H1 (cell line): ENCODE measurements at regions of chr5 and their contacts with region 1.

Region 1: GRCh38 chr5:73705364-73705763 is 79.4 kb downstream of the ARHGEF28 start:
- DNase-seq: no peak
- H3K4me3 ChIP-seq: no peak overlapping the region
- H3K27ac ChIP-seq: no peak overlapping the region
- H3K4me1 ChIP-seq: no peaks in the 10 kb centered on the region
- H3K27me3 ChIP-seq: no peaks in the 10 kb centered on the region
- CTCF ChIP-seq: no peak
- EP300 ChIP-seq: no peak
- POLR2A ChIP-seq: no peak
- RAD21 ChIP-seq: no peak

Region 2: GRCh38 chr5:73693481-73694061 is 11.8 kb before region 1 on chr5:
- CTCF ChIA-PET with region 1: interaction called, 21 read pairs
- POLR2A ChIA-PET with region 1: interaction called, 3 read pairs
- DNase-seq: peak in 1 of 2 experiments; percentile 7
- H3K4me3 ChIP-seq: no peak overlapping the region
- H3K27ac ChIP-seq: no peak overlapping the region
- H3K4me1 ChIP-seq: peaks cover 2 to 8% (median 5%) of the 10 kb centered on the region in 4 experiments; a peak in 4 of 7 replicates
- H3K27me3 ChIP-seq: no peaks in the 10 kb centered on the region; a peak in 1 of 7 replicates
- CTCF ChIP-seq: peak in 1 of 3 experiments; percentile 25; a peak in 1 of 4 replicates
- EP300 ChIP-seq: no peak
- POLR2A ChIP-seq: no peak
- RAD21 ChIP-seq: no peak; a peak in 1 of 4 replicates